ENCODE measurements at regions of chr1 and their contacts with region 1.

Region 1: GRCh38 chr1:150529017-150529416 is 13.5 kb downstream of the FALEC start:
- DNase-seq: no peak
- ATAC-seq: no peak
- H3K4me3 ChIP-seq: no peak overlapping the region
- H3K27ac ChIP-seq: no peak overlapping the region
- H3K4me1 ChIP-seq: no peaks in the 10 kb centered on the region
- H3K27me3 ChIP-seq: no peaks in the 10 kb centered on the region
- CTCF ChIP-seq: no peak

Region 2: GRCh38 chr1:150464422-150464826 is 64.6 kb before region 1 on chr1:
- CTCF ChIA-PET with region 1: no interaction called
- POLR2A ChIA-PET with region 1: interaction called, 10 read pairs
- in situ Hi-C with region 1: no loop called
- intact Hi-C with region 1: no loop called
- DNase-seq: peak; percentile 51
- ATAC-seq: peak; percentile 71; the same call in 1 of the 2 replicates
- H3K4me3 ChIP-seq: no peak overlapping the region
- H3K27ac ChIP-seq: no peak overlapping the region
- H3K4me1 ChIP-seq: no peaks in the 10 kb centered on the region
- H3K27me3 ChIP-seq: no peaks in the 10 kb centered on the region
- CTCF ChIP-seq: peak; percentile 87

Region 3: DNA sequence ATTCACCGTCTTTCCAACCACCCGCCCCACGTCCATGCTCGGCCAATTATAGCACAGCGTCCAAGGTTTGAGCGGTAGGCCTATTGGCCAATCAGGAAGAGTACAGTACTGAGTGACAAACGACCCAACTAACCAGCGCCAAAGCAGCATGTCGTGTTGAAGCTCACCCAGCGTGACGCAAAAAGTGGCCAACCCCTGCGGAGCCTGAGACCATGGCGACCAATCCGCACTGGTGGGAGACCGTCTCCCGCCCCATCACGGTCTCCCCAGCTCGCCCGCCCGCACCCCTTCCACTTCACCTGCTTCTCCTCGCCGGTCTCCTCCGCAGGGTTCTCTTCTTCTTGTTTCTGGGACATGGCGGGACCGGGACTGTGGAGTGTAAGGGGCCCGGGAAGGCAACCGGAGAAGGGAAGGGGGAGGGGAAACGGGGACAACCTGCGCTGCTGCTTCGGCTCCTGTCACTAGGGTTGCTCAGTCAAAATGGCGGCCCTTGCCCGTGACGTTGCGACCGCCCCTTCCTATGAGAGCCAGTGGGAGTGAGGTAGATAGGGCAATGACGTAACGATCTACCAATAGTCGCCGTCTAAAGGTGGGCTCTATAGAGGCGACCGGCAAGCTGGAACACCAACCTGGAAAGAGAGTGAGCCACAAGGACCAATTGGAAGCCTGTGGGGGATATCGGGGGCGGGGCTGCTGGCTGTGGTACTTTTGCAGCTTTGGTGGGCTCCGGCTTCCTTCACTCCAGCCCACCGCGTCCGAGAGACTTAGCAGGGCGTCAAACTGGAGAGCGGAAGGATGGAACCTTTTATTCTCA is 100.3 kb after region 1 on chr1 and contains the start of gene ENSA:
- CTCF ChIA-PET with region 1: interaction called, 10 read pairs
- POLR2A ChIA-PET with region 1: no interaction called
- in situ Hi-C with region 1: no loop called
- intact Hi-C with region 1: no loop called
- DNase-seq: peak; percentile 98
- ATAC-seq: peak; percentile 97
- H3K4me3 ChIP-seq: peak within 1 kb of the TSS; percentile 60 to 96
- H3K27ac ChIP-seq: peak within 1 kb of the TSS; percentile 97
- H3K4me1 ChIP-seq: peaks cover 8% of the 10 kb centered on the region
- H3K27me3 ChIP-seq: no peaks in the 10 kb centered on the region
- CTCF ChIP-seq: no peak
- total RNA-seq, gene ENSA: 207 TPM

Region 4: DNA sequence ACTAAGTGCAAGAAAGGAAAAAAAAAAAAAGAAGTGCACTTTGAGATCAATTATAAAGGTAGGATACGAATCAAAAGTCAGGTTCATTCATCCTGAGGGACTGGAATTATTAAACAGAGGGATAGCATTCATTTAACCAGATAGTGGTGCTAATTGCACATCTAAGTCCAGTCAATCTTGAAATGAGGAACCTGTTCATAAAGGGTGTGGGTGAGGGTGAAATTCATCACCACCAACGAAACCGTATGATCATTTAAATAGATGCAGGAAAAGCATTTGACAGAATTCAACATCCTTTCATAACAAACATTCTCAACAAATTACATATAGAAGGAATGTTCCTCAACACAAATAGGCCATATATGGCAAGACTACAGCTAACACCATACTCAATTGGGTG is 231.0 kb after region 1 on chr1:
- CTCF ChIA-PET with region 1: no interaction called
- POLR2A ChIA-PET with region 1: no interaction called
- in situ Hi-C with region 1: no loop called
- intact Hi-C with region 1: no loop called
- DNase-seq: no peak
- ATAC-seq: no peak
- H3K4me3 ChIP-seq: no peak overlapping the region
- H3K27ac ChIP-seq: no peak overlapping the region
- H3K4me1 ChIP-seq: no peaks in the 10 kb centered on the region; the same call in 1 of the 2 replicates
- H3K27me3 ChIP-seq: no peaks in the 10 kb centered on the region; the same call in 1 of the 2 replicates
- CTCF ChIP-seq: no peak